Panc1 (cell line): ENCODE measurements at regions of chr10 and their contacts with region 1.

Region 1: DNA sequence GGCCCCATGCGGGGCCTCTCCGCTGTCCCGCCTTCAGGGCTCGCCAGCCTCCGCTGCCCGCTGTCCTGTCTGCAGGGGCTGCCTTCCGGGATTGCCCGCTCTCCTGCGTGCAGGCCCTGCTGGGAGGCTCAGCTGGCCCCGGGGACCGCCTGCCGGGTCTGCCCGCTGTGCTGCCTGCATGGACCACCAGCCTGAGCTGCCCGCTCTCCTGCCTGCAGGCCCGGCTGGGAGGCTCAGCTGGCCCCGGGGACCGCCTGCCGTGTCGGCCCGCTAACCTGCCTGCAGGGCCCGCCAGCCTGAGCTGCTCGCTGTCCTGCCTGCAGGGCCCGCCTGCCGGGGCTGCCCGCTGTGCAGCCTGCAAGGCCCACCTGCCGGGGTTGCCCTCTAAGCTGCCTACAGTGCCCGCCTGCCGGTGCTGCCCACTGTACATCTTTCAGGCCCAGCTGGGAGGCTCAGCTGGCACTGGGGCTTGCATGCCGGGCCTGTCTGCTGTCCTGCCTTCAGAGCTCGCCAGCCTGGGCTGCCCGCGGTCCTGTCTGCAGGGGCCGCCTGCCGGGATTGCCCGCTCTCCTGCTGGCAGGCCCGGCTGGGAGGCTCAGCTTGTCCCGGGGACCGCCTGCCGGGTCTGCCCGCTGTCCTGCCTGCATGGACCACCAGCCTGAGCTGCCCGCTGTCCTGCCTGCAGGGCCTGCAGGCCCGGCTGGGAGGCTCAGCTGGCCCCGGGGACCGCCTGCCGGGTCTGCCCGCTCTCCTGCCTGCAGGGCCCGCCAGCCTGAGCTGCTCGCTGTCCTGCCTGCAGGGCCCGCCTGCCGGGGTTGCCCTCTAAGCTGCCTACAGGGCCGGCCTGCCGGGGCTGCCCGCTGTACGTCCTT is 165.1 kb downstream of the GLRX3 start:
- DNase-seq: no peak
- ATAC-seq: no peak
- H3K4me3 ChIP-seq: no peak overlapping the region
- H3K27ac ChIP-seq: no peak overlapping the region
- H3K4me1 ChIP-seq: no peaks in the 10 kb centered on the region
- H3K27me3 ChIP-seq: no peaks in the 10 kb centered on the region
- CTCF ChIP-seq: no peak

Region 2: GRCh38 chr10:130146042-130146441 is 155.2 kb before region 1 on chr10:
- CTCF ChIA-PET with region 1: interaction called, 15 read pairs
- POLR2A ChIA-PET with region 1: no interaction called
- in situ Hi-C with region 1: no loop called
- intact Hi-C with region 1: no loop called
- DNase-seq: no peak
- ATAC-seq: no peak
- H3K4me3 ChIP-seq: no peak overlapping the region
- H3K27ac ChIP-seq: no peak overlapping the region
- H3K4me1 ChIP-seq: peaks cover 9% of the 10 kb centered on the region
- H3K27me3 ChIP-seq: no peaks in the 10 kb centered on the region
- CTCF ChIP-seq: no peak

Region 3: GRCh38 chr10:130190055-130190736 is 111.1 kb before region 1 on chr10:
- CTCF ChIA-PET with region 1: no interaction called
- POLR2A ChIA-PET with region 1: no interaction called
- in situ Hi-C with region 1: no loop called
- intact Hi-C with region 1: no loop called
- DNase-seq: peak; percentile 43
- ATAC-seq: peak; percentile 92
- H3K4me3 ChIP-seq: peak overlapping the region; percentile 37 to 41
- H3K27ac ChIP-seq: no peak overlapping the region
- H3K4me1 ChIP-seq: no peaks in the 10 kb centered on the region; the same call in 1 of the 2 replicates
- H3K27me3 ChIP-seq: no peaks in the 10 kb centered on the region
- CTCF ChIP-seq: peak; percentile 100